Aorta (tissue), 5 donors: ENCODE measurements at regions of chr16 and their contacts with region 1.

Region 1: DNA sequence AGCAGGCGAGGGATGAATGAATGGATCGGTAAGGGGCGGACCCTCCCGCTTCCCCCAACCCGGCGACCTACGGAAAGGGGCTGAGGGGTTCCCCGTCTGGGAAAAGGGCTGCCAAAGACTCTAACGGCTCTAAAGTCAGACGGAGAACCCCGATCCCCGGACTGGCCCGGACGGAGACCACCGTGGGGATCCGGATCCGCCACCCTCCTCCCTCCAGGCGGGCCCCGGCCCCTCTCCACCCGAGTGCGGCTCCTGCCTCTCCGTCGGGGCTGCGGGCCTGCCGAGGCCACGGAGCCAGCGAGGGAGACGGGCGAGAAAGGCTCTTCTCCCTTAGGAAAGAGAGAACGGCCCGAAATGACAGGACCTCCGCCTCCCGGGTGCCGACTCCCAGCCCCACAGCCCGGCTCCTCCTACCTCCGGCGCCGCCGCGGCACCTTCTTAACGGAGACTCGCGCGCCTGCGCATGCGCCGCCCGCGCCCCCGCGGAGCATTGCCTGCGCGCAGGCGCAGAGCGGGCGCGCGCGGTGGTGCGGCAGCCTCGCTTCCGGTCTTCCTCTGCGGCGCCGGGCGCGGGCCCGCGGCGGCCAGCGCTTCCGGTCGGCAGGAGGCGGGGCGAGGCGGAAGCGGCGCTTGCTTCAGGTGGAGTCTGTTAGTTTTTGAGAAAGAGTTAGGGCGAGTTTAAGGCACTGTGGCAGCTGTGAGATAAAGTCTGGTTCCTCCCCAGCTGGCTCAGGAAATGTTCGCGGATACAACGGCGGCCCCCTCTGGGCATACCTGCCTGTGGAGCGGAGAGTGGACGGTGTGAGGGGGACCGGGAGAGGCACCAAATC is at the start of gene SLX4:
- DNase-seq: peak; percentile 95 to 97
- ATAC-seq: peak; percentile 95
- H3K4me3 ChIP-seq: peak within 1 kb of the TSS; percentile 76 to 90
- H3K27ac ChIP-seq: peak within 1 kb of the TSS in 1 of 2 donors; percentile 41
- H3K4me1 ChIP-seq: no peaks in the 10 kb centered on the region
- H3K27me3 ChIP-seq: no peaks in the 10 kb centered on the region
- total RNA-seq, gene SLX4: 4.9 to 5.0 TPM

Region 2: GRCh38 chr16:3509470-3509928 is 101.9 kb before region 1 on chr16:
- intact Hi-C with region 1: no loop called
- DNase-seq: no peak
- ATAC-seq: no peak
- H3K4me3 ChIP-seq: no peak overlapping the region
- H3K27ac ChIP-seq: no peak overlapping the region
- H3K4me1 ChIP-seq: no peaks in the 10 kb centered on the region
- H3K27me3 ChIP-seq: no peaks in the 10 kb centered on the region

Region 3: DNA sequence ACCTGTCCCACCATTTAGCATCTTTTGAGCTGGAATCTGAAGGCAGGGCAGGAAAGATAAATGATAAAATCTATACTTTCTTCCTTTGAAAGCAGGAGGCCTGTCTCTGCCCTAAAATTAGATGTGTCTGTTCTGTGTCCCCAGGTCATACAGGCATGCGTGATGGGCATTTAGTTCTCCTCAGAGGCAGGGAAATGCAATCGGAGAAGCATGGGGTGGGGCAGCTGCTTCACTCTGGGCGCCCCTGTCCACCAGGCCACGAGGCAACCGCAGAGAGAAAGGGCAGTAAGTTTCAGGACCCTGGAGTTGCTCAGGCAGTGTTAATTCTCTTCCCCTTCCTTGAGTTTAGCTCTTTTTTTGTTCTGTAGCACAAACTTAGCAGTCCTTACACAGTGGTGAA is 85.4 kb before region 1 on chr16:
- intact Hi-C with region 1: loop called in 1 of 2 experiments (anchors 5 kb)
- DNase-seq: no peak
- ATAC-seq: no peak
- H3K4me3 ChIP-seq: no peak overlapping the region
- H3K27ac ChIP-seq: no peak overlapping the region
- H3K4me1 ChIP-seq: no peaks in the 10 kb centered on the region
- H3K27me3 ChIP-seq: no peaks in the 10 kb centered on the region

Region 4: GRCh38 chr16:3536271-3536731 is 75.1 kb before region 1 on chr16:
- intact Hi-C with region 1: loop called (anchors 2 to 5 kb)
- DNase-seq: no peak
- ATAC-seq: no peak
- H3K4me3 ChIP-seq: no peak overlapping the region
- H3K27ac ChIP-seq: peak overlapping the region; percentile 89 to 91
- H3K4me1 ChIP-seq: peaks cover 0 to 5% of the 10 kb centered on the region in 2 donors
- H3K27me3 ChIP-seq: no peaks in the 10 kb centered on the region